ENCODE measurements at regions of chr17 and their contacts with region 1.

Region 1: GRCh38 chr17:3012926-3013581 is 50.4 kb downstream of the OR1D5 start:
- DNase-seq: peak; percentile 48 to 76
- H3K4me3 ChIP-seq: no peak overlapping the region
- H3K27ac ChIP-seq: no peak overlapping the region
- H3K4me1 ChIP-seq: no peaks in the 10 kb centered on the region
- H3K27me3 ChIP-seq: no peaks in the 10 kb centered on the region
- CTCF ChIP-seq: peak; percentile 90

Region 2: GRCh38 chr17:2049333-2050299 is 963.4 kb before region 1 on chr17:
- CTCF ChIA-PET with region 1: no interaction called
- POLR2A ChIA-PET with region 1: no interaction called
- intact Hi-C with region 1: no loop called
- DNase-seq: peak in 1 of 2 experiments; percentile 87
- H3K4me3 ChIP-seq: peak overlapping the region; percentile 87
- H3K27ac ChIP-seq: no peak overlapping the region
- H3K4me1 ChIP-seq: peaks cover 20% of the 10 kb centered on the region
- H3K27me3 ChIP-seq: peaks cover 12% of the 10 kb centered on the region
- CTCF ChIP-seq: no peak

Region 3: GRCh38 chr17:2770129-2770528 is 242.9 kb before region 1 on chr17:
- CTCF ChIA-PET with region 1: no interaction called
- POLR2A ChIA-PET with region 1: no interaction called
- intact Hi-C with region 1: no loop called
- DNase-seq: no peak
- H3K4me3 ChIP-seq: no peak overlapping the region
- H3K27ac ChIP-seq: no peak overlapping the region
- H3K4me1 ChIP-seq: no peaks in the 10 kb centered on the region
- H3K27me3 ChIP-seq: peaks cover 71% of the 10 kb centered on the region
- CTCF ChIP-seq: no peak

Region 4: GRCh38 chr17:2786176-2786881 is 226.7 kb before region 1 on chr17:
- CTCF ChIA-PET with region 1: interaction called, 15 read pairs
- POLR2A ChIA-PET with region 1: no interaction called
- intact Hi-C with region 1: loop called (anchors 2 kb)
- DNase-seq: peak; percentile 68 to 97
- H3K4me3 ChIP-seq: no peak overlapping the region
- H3K27ac ChIP-seq: no peak overlapping the region
- H3K4me1 ChIP-seq: no peaks in the 10 kb centered on the region
- H3K27me3 ChIP-seq: peaks cover 24% of the 10 kb centered on the region
- CTCF ChIP-seq: peak; percentile 87

Region 5: DNA sequence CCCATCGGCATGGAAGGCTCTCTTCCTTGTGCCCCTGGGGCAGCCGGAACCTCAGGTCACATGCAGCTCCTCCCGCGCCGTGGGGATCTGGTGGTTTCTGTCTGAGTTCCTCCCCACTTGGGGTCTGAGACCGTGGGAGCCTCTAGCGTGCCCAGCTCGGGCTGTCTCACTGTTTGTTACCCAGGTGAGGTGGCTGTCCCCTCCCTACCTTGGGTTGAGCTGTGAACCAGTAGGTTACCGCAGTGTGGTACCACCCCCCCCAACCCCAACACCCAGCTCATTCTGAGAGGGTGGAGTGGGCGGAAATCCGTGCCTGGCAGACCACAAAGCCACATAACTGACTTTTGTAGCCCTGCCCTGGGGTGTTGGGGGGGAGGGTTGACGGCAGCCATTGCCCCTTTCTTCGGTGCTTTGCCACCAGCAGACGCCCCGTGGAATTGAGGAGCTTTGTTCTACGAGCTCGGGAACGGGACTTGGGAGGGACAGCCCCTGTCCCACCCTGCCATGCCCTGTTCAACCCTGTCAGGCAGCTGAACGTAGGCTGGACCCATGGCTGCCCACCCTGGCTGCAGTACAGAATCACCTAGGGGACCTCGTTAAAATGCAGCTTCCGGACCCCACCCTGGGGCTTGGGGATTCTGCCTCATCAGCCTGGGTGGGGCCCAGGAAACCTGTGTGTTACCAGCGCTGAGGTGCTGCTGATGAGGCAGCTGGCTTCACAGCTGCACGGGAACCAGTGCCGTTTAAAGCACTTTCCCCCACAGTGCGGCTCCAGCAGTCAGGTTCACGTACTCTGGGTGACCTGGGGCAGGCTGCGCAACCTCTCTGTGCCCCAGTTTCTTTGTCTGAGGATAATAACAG is 198.3 kb before region 1 on chr17:
- CTCF ChIA-PET with region 1: no interaction called
- POLR2A ChIA-PET with region 1: interaction called, 29 read pairs
- intact Hi-C with region 1: no loop called
- DNase-seq: peak in 1 of 2 experiments; percentile 35
- H3K4me3 ChIP-seq: no peak overlapping the region
- H3K27ac ChIP-seq: no peak overlapping the region
- H3K4me1 ChIP-seq: peaks cover 20% of the 10 kb centered on the region
- H3K27me3 ChIP-seq: no peaks in the 10 kb centered on the region
- CTCF ChIP-seq: no peak

Region 6: GRCh38 chr17:2828397-2829038 is 184.5 kb before region 1 on chr17:
- CTCF ChIA-PET with region 1: interaction called, 8 read pairs
- POLR2A ChIA-PET with region 1: no interaction called
- intact Hi-C with region 1: loop called (anchors 1 kb)
- DNase-seq: peak in 1 of 2 experiments; percentile 85
- H3K4me3 ChIP-seq: no peak overlapping the region
- H3K27ac ChIP-seq: no peak overlapping the region
- H3K4me1 ChIP-seq: no peaks in the 10 kb centered on the region
- H3K27me3 ChIP-seq: 0 out of 2 replicates have a peak, but pooled peaks cover 3% of the 10 kb centered on the region
- CTCF ChIP-seq: peak; percentile 93

Region 7: GRCh38 chr17:2844416-2844815 is 168.6 kb before region 1 on chr17:
- CTCF ChIA-PET with region 1: interaction called, 30 read pairs
- POLR2A ChIA-PET with region 1: interaction called, 3 read pairs
- intact Hi-C with region 1: loop called (anchors 1 kb)
- DNase-seq: peak in 1 of 2 experiments; percentile 49
- H3K4me3 ChIP-seq: no peak overlapping the region
- H3K27ac ChIP-seq: no peak overlapping the region
- H3K4me1 ChIP-seq: 0 out of 2 replicates have a peak, but pooled peaks cover 9% of the 10 kb centered on the region
- H3K27me3 ChIP-seq: no peaks in the 10 kb centered on the region
- CTCF ChIP-seq: no peak

Region 8: DNA sequence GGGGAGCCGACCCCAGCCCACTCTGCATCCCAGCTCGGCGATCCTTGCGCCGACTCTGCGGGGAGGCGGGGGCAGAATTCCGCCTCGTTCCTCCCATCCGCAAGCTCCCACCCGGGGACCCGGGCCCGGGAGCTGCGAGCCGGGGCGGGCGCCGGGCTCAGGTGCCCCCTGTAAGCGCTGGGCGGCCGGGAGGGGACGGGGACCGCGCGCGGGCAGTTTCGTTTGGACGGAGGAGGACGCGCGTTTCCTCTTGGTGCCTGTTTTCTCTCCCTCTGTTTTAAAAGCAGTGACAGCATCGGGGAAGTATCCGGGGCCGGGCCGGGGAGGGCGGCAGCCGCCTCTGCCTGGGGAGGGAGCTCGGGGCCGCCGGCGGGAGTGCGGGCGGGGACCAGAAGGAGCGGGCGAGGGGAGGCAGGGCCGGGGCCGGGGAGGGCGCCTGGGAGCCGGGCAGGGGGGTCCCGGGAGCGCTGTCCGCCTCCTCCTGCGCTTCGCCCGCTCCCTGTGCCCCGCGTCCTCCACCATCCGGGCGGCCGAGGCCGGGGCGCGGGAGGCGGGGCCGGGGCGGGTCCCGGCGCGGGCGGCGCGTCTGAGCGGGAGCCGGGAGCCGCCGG is 159.8 kb before region 1 on chr17:
- CTCF ChIA-PET with region 1: interaction called, 30 read pairs
- POLR2A ChIA-PET with region 1: no interaction called
- intact Hi-C with region 1: loop called (anchors 1 kb)
- DNase-seq: peak in 1 of 2 experiments; percentile 67
- H3K4me3 ChIP-seq: peak overlapping the region; percentile 89; the same call in 1 of the 2 replicates
- H3K27ac ChIP-seq: no peak overlapping the region
- H3K4me1 ChIP-seq: peaks cover 11% of the 10 kb centered on the region; the same call in 1 of the 2 replicates
- H3K27me3 ChIP-seq: 0 out of 2 replicates have a peak, but pooled peaks cover 6% of the 10 kb centered on the region
- CTCF ChIP-seq: no peak

Region 9: DNA sequence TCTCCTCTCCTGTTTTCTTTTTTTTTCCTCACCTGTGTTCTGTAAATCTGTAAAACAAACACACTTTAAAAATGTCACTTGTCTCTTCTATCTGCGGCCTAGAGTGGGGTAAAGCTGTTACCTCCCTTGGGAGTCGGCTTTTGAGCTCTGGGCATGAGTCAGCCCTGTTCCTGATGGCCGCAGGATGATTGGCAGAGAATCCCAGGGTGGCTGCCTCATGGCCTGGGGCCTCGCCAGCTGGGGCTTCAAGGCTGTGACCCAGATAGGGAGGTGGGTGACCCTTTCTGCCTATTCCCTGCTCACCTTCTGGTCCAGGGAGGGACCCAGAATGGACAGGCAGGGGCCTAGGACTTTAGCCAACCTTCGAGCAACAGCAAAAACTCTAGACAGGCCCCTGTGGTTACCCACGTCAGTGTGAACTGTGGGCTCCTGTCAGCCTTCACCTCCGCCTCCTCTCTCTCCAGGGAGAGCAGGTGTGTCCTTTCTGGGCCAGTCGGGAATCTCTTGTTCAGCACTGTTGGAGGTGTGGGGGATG is 129.4 kb before region 1 on chr17:
- CTCF ChIA-PET with region 1: no interaction called
- POLR2A ChIA-PET with region 1: no interaction called
- intact Hi-C with region 1: no loop called
- DNase-seq: peak; percentile 42 to 72
- H3K4me3 ChIP-seq: no peak overlapping the region
- H3K27ac ChIP-seq: no peak overlapping the region
- H3K4me1 ChIP-seq: peaks cover 11% of the 10 kb centered on the region
- H3K27me3 ChIP-seq: no peaks in the 10 kb centered on the region
- CTCF ChIP-seq: no peak

Measured in PC-9 (cell line).